ENCODE measurements at regions of chr3 and their contacts with region 1.

Region 1: DNA sequence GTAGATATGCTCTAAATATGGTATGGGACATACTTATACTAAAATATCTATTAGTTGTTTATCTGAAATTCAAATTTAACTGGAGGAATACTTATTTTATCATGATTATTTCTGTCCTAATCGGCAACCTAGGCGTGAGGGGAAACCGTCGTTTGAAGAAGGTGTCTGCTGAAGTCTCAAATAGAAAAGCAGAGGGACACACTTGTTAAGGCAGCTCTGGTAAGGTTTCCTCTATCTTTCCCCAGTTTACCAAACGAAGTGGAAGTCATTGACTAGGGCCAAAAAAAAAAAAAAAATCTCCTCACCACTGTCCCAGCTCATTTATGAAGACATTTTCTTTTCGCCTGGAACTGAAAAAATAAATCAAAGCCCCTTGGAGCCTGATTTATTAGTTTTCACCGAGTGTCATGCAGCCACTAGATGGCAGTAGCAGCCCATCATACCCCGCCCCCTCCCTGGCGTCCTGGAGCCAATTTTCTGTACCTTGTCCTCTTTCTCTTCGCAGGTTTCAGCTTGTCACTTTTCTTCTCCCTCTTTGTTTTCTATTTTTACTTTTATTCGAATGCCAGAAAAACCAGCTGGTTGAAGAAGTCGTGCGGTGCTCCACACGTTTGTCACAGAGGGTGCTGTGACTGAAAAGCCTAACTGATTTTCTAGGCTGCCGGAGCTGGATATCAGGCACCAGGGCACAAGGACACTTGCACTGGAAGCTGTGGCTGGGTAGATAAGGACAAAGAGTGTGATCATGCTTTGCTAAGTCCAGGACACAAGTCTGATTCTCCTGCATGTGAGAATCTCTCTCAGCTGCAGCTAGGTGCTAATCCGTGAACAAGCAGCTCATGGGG is 238.7 kb downstream of the ZPLD1 start:
- DNase-seq: peak; percentile 73
- H3K4me3 Mint-ChIP-seq: no peak overlapping the region
- H3K27ac Mint-ChIP-seq: no peak overlapping the region
- H3K4me1 Mint-ChIP-seq: no peaks in the 10 kb centered on the region
- H3K27me3 Mint-ChIP-seq: peaks cover 5% of the 10 kb centered on the region

Region 2: GRCh38 chr3:102553876-102554275 is 119.6 kb before region 1 on chr3:
- CTCF ChIA-PET with region 1: no interaction called
- DNase-seq: no peak
- H3K4me3 Mint-ChIP-seq: no peak overlapping the region
- H3K27ac Mint-ChIP-seq: no peak overlapping the region
- H3K4me1 Mint-ChIP-seq: no peaks in the 10 kb centered on the region
- H3K27me3 Mint-ChIP-seq: no peaks in the 10 kb centered on the region

Region 3: GRCh38 chr3:102741108-102741507 is 67.6 kb after region 1 on chr3:
- CTCF ChIA-PET with region 1: interaction called, 12 read pairs
- DNase-seq: no peak
- H3K4me3 Mint-ChIP-seq: no peak overlapping the region
- H3K27ac Mint-ChIP-seq: no peak overlapping the region
- H3K4me1 Mint-ChIP-seq: no peaks in the 10 kb centered on the region
- H3K27me3 Mint-ChIP-seq: peaks cover 5% of the 10 kb centered on the region

Measured in activated naive CD4-positive, alpha-beta T cell treated with anti-CD3 and anti-CD28 coated beads, Interleukin-2, amount 10 ng/mL, durations not matched to agents 7 days and 5 days (primary cell).